PC-3 (cell line): ENCODE measurements at regions of chr4 and their contacts with region 1.

Region 1: GRCh38 chr4:147334478-147334877 is 146.4 kb upstream of the EDNRA start:
- DNase-seq: peak; percentile 73
- ATAC-seq: peak; percentile 96
- H3K4me3 ChIP-seq: no peak overlapping the region
- H3K27ac ChIP-seq: peak overlapping the region; percentile 59
- H3K4me1 ChIP-seq: peaks cover 14% of the 10 kb centered on the region; the same call in 1 of the 2 replicates
- H3K27me3 ChIP-seq: no peaks in the 10 kb centered on the region
- CTCF ChIP-seq: no peak

Region 2: GRCh38 chr4:147299205-147299604 is 35.3 kb before region 1 on chr4:
- CTCF ChIA-PET with region 1: no interaction called
- POLR2A ChIA-PET with region 1: no interaction called
- intact Hi-C with region 1: loop called (anchors 2 kb)
- DNase-seq: peak; percentile 85
- ATAC-seq: peak; percentile 94
- H3K4me3 ChIP-seq: no peak overlapping the region
- H3K27ac ChIP-seq: peak overlapping the region; percentile 78
- H3K4me1 ChIP-seq: peaks cover 19% of the 10 kb centered on the region
- H3K27me3 ChIP-seq: no peaks in the 10 kb centered on the region
- CTCF ChIP-seq: no peak

Region 3: DNA sequence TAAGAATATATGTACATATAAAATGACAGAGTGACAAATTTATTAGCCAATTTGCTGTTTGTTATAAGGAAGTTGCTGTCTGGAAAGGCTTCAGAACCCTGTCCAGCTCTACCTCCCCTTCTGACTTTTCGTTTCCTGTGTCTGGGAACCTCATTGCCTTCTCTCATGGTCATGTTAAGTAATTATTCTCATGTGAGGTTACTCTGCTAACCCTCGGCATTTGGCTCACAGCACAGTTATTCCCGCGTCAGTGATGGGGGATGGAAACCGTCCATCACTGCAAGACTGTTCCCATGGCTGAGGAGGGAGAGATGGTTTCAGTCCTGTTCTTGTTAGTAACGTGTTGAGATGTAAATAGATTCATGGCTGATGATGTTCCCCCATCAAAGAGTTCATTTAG is 158.3 kb after region 1 on chr4:
- CTCF ChIA-PET with region 1: no interaction called
- POLR2A ChIA-PET with region 1: no interaction called
- intact Hi-C with region 1: no loop called
- DNase-seq: no peak
- ATAC-seq: no peak
- H3K4me3 ChIP-seq: no peak overlapping the region
- H3K27ac ChIP-seq: no peak overlapping the region
- H3K4me1 ChIP-seq: peaks cover 2% of the 10 kb centered on the region; the same call in 1 of the 2 replicates
- H3K27me3 ChIP-seq: no peaks in the 10 kb centered on the region
- CTCF ChIP-seq: no peak